ENCODE measurements at regions of chr15 and their contacts with region 1.

Region 1: GRCh38 chr15:71501344-71502076 is 308.8 kb upstream of the NR2E3 start:
- DNase-seq: no peak
- ATAC-seq: peak; percentile 88

Region 2: GRCh38 chr15:71103102-71103676 is 398.3 kb before region 1 on chr15:
- intact Hi-C with region 1: no loop called
- DNase-seq: no peak
- ATAC-seq: peak; percentile 42

Region 3: GRCh38 chr15:71526060-71526820 is 24.7 kb after region 1 on chr15:
- intact Hi-C with region 1: no loop called
- DNase-seq: no peak
- ATAC-seq: no peak

Region 4: GRCh38 chr15:71547011-71547410 is 45.5 kb after region 1 on chr15:
- intact Hi-C with region 1: loop called (anchors 5 kb)
- DNase-seq: peak; percentile 74
- ATAC-seq: peak; percentile 66

Measured in Right ventricle myocardium inferior (tissue), 1 donor.